Psoas muscle (tissue), 8 donors: ENCODE measurements at regions of chr5 and their contacts with region 1.

Region 1: DNA sequence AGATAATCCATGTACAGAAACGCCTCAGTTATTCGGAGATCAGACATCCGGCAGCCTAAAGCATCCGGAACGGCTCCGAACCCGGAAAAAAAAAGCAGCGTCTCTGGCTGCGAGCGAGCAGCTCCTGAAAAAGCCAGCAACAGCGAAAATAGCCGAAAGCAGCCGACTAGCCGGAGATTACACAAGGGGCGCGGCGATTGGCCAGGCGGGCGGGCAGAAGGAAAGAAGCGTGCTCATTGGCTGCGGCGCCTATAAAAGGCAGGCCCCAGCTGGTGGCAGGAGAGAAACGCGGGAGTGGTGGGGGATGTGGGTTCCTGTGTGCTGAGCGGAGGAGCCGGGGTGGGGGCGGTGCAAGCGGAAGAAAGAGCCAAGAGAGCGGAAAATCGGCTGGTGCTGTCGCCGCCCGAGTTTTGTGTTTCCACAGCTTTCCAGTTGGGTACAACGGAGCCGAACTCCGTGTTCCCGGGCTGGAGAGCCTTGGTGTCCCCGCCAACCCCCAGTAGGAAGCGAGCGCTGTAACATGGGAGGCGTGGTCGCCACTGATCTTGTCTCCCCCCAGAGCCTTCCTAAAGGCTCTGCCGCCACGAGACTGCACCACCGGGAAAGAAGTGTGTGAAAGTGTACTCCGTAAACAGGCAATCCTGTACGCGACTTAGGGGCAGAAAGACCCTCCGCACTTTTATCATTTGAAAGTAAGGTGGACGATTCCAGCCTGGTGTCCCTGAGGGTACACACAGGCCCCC is at the start of gene ARL15:
- DNase-seq: peak; percentile 99
- ATAC-seq: peak; percentile 99
- H3K4me3 ChIP-seq: peak within 1 kb of the TSS; percentile 80
- H3K27ac ChIP-seq: peak within 1 kb of the TSS; percentile 81
- H3K4me1 ChIP-seq: peaks cover 11% of the 10 kb centered on the region
- H3K27me3 ChIP-seq: no peaks in the 10 kb centered on the region
- CTCF ChIP-seq: no peak
- total RNA-seq, gene ARL15: 4.4 to 8.9 (median 5.9) TPM

Region 2: DNA sequence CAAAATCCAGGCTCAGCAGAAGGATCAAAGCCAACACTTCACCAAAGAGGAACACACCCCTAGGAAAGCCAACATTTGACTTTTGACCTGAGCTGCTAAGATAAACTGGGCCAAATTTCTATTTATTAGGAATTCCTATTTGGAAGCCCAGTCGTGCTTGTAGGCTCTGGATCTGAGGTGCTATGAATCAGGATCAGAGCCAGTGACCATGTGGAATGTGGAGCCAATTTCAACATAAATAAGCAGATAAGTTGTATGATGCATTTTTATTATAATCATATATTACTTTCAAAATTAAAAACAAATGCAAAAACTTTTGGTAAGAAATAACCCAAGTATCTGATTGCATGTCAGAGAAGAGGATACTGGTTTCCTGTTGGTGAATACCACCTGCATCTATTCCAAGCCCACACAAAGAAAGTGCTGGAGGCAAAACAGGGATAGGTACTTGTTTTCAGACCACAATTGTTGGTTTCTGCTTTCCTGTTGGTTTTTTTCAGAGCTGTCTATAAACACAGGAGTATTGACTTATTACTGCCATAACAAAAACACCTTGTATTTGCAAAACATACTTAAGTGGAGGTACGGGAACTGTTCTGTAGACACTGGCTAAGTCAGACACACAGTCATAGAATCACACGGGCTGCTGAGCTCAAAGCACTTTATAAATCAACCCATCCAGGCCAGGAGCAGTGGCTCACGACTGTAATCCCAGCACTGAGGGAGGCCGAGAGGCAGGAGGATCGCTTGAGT is 53.1 kb before region 1 on chr5:
- intact Hi-C with region 1: no loop called
- DNase-seq: no peak
- ATAC-seq: no peak
- H3K4me3 ChIP-seq: no peak overlapping the region
- H3K27ac ChIP-seq: no peak overlapping the region
- H3K4me1 ChIP-seq: peaks cover 9% of the 10 kb centered on the region
- H3K27me3 ChIP-seq: no peaks in the 10 kb centered on the region
- CTCF ChIP-seq: no peak

Region 3: DNA sequence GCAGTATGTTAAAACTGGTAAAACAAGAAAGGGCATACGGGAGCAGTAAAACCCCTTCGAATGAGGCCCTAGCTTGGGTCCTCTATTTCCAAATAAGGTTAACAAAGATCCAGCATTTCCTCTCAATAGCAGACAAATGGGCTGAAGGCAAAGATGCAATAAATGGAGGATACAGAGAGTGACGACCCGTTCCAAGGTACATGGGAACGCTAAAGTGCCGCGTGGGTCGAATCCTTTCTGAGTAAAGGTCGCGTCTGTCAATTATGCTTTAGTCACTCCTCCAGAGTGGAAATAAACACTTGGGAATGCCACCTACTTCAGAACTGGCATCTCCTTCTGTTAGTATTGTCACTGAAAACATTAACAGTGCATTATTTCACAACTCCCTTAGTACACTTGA is 24.9 kb before region 1 on chr5:
- intact Hi-C with region 1: no loop called
- DNase-seq: no peak
- ATAC-seq: no peak
- H3K4me3 ChIP-seq: no peak overlapping the region
- H3K27ac ChIP-seq: no peak overlapping the region
- H3K4me1 ChIP-seq: no peaks in the 10 kb centered on the region
- H3K27me3 ChIP-seq: no peaks in the 10 kb centered on the region
- CTCF ChIP-seq: no peak

Region 4: DNA sequence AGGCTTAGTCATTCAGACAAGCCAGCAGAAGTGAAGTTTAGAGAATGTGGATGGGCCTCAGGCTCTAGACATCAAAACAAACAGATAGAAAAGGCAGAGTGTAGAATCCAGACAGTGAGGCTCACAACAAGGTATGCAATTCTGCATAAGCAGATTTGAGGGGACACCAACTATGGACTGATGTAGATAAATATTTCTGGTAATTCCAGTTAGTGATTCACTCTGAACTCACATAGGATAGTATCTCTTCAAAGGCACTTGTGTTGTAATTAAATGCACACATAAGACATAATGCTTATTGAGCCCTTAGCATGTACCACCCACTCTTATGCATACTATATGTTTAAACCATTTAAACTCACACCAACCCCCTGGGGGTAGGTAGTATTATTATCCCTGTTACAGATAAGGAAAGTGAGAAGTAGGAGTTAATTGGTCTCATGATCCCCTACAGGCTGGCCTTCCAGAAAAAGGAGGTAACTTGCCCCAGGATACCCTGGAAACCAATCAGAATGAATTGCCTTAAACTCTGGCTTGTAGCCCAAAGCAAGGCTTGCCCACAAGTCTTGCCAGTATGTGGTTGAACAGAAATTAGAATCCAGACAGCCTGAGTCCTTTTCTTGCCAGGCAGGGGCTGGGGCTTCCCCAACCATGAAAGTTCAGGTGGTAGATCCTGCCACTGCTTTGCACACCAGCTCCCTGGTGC is 105.4 kb after region 1 on chr5:
- intact Hi-C with region 1: loop called in 1 of 2 experiments (anchors 10 kb)
- DNase-seq: no peak
- ATAC-seq: no peak
- H3K4me3 ChIP-seq: no peak overlapping the region
- H3K27ac ChIP-seq: no peak overlapping the region
- H3K4me1 ChIP-seq: no peaks in the 10 kb centered on the region
- H3K27me3 ChIP-seq: no peaks in the 10 kb centered on the region
- CTCF ChIP-seq: no peak

Region 5: DNA sequence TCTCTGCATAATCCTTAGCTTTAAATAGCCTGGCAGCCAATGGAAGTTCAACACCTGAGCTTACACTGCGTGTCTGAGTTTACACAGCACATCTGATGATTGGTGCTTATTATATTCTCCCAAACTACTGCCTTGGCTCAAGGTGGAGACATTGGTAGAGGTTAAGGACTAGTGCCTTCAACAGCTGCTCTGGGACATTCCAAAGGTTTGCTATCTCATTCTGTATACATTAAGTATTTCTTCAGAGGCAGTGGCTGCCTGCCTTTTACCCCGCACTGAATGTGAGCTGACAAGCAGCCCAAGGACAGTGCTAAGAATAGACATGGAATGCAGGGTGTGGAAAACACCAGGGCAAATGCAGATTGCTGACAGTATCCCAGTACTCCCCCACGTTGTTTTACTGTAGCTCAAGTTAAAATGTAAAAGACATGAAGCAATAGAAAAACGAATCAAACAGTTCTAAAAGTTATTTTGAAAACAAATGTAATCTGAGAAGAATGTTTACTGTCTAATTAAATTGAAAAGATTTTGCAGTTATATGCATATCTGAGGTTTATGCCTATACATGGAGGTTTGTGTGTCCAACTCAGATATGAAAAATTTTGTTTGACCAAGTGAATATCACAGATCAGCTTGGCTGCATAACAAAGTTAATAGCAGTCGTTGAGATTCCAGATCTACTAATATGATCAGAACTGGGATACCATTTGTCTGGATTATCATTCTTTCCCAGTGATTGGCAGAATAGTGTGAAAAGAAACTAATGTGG is 146.7 kb after region 1 on chr5:
- intact Hi-C with region 1: no loop called
- DNase-seq: peak in 1 of 2 donors; percentile 63
- ATAC-seq: peak; percentile 75 to 79 (median 78)
- H3K4me3 ChIP-seq: peak overlapping the region; percentile 73
- H3K27ac ChIP-seq: peak overlapping the region; percentile 82
- H3K4me1 ChIP-seq: peaks cover 21% of the 10 kb centered on the region
- H3K27me3 ChIP-seq: no peaks in the 10 kb centered on the region
- CTCF ChIP-seq: no peak

Region 6: DNA sequence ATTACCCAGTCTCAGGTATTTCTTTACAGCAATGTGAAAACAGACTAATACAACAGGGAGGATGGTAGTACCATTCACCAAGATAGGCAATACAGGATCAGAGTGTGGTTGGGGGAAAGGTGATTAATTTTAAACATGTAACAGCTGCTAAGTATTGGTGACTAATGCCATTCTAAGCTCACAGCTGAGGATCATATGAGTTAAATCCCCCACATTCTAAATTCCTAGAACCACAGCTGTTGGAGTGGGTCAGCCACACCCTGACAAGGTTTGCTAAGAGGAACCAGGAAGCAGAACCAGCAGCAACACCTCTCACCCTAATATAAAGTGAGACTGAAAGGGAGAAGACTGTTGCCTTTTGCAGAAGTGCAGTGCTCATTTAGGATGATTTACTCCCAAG is 169.7 kb after region 1 on chr5:
- intact Hi-C with region 1: loop called in 1 of 2 experiments (anchors 5 kb)
- DNase-seq: no peak
- ATAC-seq: peak in 1 of 4 donors; percentile 30
- H3K4me3 ChIP-seq: no peak overlapping the region
- H3K27ac ChIP-seq: no peak overlapping the region
- H3K4me1 ChIP-seq: peaks cover 16% of the 10 kb centered on the region
- H3K27me3 ChIP-seq: no peaks in the 10 kb centered on the region
- CTCF ChIP-seq: no peak

Region 7: GRCh38 chr5:54492178-54492577 is 181.6 kb after region 1 on chr5:
- intact Hi-C with region 1: loop called in 1 of 2 experiments (anchors 10 kb)
- DNase-seq: no peak
- ATAC-seq: no peak
- H3K4me3 ChIP-seq: no peak overlapping the region
- H3K27ac ChIP-seq: no peak overlapping the region
- H3K4me1 ChIP-seq: peaks cover 4% of the 10 kb centered on the region
- H3K27me3 ChIP-seq: peaks cover 0 to 4% (median 0%) of the 10 kb centered on the region in 3 donors
- CTCF ChIP-seq: no peak

Region 8: GRCh38 chr5:54601411-54602230 is 291.0 kb after region 1 on chr5:
- intact Hi-C with region 1: no loop called
- DNase-seq: no peak
- ATAC-seq: no peak
- H3K4me3 ChIP-seq: no peak overlapping the region
- H3K27ac ChIP-seq: no peak overlapping the region
- H3K4me1 ChIP-seq: no peaks in the 10 kb centered on the region
- H3K27me3 ChIP-seq: no peaks in the 10 kb centered on the region
- CTCF ChIP-seq: no peak